Ovary (tissue), 10 donors: ENCODE measurements at regions of chr13 and their contacts with region 1.

Region 1: GRCh38 chr13:98842864-98843481 is 90.5 kb upstream of the SLC15A1 start:
- DNase-seq: peak; percentile 45 to 67 (median 54)
- H3K4me3 ChIP-seq: no peak overlapping the region
- H3K27ac ChIP-seq: no peak overlapping the region
- H3K4me1 ChIP-seq: no peaks in the 10 kb centered on the region
- H3K27me3 ChIP-seq: no peaks in the 10 kb centered on the region
- CTCF ChIP-seq: peak in 2 of 3 donors; percentile 8 to 34
- EP300 ChIP-seq: no peak
- POLR2A ChIP-seq: no peak

Region 2: DNA sequence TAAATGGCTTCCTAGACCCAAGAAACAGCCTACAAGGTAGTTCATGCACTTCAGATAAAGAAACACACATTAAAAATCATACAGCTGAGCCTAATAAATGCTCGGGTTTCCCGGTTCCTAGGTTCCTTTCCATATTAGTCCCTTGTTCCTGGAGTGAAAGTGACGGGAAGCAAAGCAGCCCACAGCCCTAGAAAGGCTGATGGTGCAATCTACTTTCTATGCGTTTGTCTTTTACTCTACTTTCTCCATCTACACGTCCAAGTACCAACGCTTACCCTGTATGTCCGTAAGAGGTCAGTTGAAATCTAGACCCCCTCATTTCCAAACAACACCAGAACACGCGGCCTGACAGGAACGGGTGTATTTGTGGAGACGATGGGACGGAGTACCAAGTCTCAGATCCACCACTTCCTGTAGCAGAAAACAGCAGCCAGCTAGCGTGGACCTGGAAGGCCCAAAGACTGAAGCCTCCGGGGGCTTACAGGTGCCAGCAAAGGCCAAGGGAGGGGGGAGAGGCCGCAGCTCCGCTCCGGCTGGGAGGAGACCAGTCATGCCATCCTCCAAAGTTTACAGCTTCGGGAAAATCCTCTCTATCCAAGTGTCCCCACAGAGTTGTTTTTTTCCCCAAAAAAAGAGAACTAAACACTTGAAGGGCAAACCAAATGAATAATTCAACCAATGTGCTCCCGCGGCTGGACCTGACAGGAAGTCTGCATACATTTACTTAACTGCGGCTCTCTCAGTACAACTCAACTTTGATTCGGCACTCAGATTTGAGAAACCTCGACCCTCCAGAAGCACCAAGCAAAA is 300.2 kb before region 1 on chr13:
- intact Hi-C with region 1: no loop called
- DNase-seq: no peak
- H3K4me3 ChIP-seq: no peak overlapping the region
- H3K27ac ChIP-seq: no peak overlapping the region
- H3K4me1 ChIP-seq: peaks cover 13% of the 10 kb centered on the region
- H3K27me3 ChIP-seq: no peaks in the 10 kb centered on the region
- CTCF ChIP-seq: no peak
- EP300 ChIP-seq: no peak
- POLR2A ChIP-seq: no peak

Region 3: DNA sequence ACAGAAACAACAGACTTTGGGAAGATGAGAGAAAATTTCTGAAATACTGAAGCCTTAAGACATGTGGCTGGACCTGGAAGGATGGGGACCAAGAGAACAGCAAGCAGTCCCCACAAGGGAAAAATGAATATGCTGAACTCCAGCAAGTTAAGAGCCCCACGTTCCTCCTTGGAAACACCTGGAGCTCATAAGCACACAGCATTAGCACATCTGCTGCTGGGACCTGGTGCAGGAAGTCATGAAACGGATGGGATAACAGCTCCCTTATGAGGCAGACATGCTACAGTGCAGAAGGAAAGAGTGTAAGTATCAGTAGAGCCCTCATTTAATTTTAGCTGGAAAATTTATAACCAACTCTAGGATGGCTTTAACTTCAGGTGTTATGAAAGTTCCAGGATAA is 157.8 kb before region 1 on chr13:
- intact Hi-C with region 1: loop called in 1 of 4 experiments (anchors 5 kb)
- DNase-seq: no peak
- H3K4me3 ChIP-seq: no peak overlapping the region
- H3K27ac ChIP-seq: no peak overlapping the region
- H3K4me1 ChIP-seq: no peaks in the 10 kb centered on the region
- H3K27me3 ChIP-seq: no peaks in the 10 kb centered on the region
- CTCF ChIP-seq: no peak
- EP300 ChIP-seq: no peak
- POLR2A ChIP-seq: no peak

Region 4: DNA sequence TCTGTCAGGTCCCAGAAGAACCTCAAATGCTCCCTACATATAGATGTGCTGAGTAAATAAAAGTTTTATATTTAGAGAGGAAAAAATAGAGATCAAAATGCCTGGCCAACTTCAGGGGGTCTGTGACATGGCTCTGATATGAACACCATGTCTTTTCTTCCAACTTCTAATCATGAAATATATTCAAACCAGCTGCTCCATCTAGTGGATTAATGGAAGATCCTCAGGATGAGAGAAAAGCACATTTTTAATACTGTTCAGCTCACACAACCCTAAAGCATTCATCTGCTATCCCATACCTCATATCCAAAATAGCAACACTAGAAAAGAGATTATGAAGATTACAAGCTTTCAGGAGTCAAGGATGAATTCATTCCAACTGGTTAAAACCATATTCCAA is 190.8 kb after region 1 on chr13:
- intact Hi-C with region 1: loop called in 2 of 4 experiments (anchors 5 to 10 kb)
- DNase-seq: no peak
- H3K4me3 ChIP-seq: no peak overlapping the region
- H3K27ac ChIP-seq: no peak overlapping the region
- H3K4me1 ChIP-seq: no peaks in the 10 kb centered on the region
- H3K27me3 ChIP-seq: no peaks in the 10 kb centered on the region
- CTCF ChIP-seq: peak; percentile 19 to 62 (median 46)
- EP300 ChIP-seq: no peak
- POLR2A ChIP-seq: no peak